ENCODE measurements at regions of chr6 and their contacts with region 1.

Region 1: GRCh38 chr6:70520575-70520974 is 46.2 kb upstream of the SDHAF4 start:
- DNase-seq: peak in 5 of 35 experiments; percentile 2 to 50 (median 5)
- ATAC-seq: no peak
- H3K4me3 ChIP-seq: no peak overlapping the region
- H3K4me3 Mint-ChIP-seq: no peak overlapping the region
- H3K27ac ChIP-seq: no peak overlapping the region
- H3K27ac Mint-ChIP-seq: no peak overlapping the region
- H3K4me1 ChIP-seq: peaks cover 0 to 4% of the 10 kb centered on the region in 2 experiments
- H3K4me1 Mint-ChIP-seq: peaks cover 7 to 16% (median 7%) of the 10 kb centered on the region in 3 donors
- H3K27me3 ChIP-seq: no peaks in the 10 kb centered on the region
- H3K27me3 Mint-ChIP-seq: no peaks in the 10 kb centered on the region

Region 2: DNA sequence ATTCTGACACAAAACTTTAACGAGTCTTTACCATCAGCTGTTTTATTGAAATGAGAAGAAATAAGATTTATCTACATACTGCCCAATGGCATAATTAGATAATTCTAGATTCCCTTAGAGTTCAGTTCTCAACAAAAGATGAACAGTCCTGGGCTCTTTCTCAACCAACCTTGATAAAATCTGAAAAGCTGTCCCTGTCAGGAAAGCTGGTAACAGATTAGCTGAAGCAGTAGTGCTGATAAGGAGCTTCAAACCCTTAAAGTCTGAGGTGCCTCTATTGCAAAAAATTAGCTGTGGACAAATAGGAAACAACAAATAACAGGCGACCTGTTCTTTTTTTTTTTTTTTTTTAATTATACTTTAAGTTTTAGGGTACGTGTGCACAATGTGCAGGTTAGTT is 143.2 kb before region 1 on chr6:
- CTCF ChIA-PET with region 1: no interaction called
- POLR2A ChIA-PET with region 1: no interaction called
- DNase-seq: no peak
- ATAC-seq: no peak
- H3K4me3 ChIP-seq: no peak overlapping the region
- H3K4me3 Mint-ChIP-seq: no peak overlapping the region
- H3K27ac ChIP-seq: no peak overlapping the region
- H3K27ac Mint-ChIP-seq: no peak overlapping the region
- H3K4me1 ChIP-seq: no peaks in the 10 kb centered on the region
- H3K4me1 Mint-ChIP-seq: no peaks in the 10 kb centered on the region
- H3K27me3 ChIP-seq: no peaks in the 10 kb centered on the region
- H3K27me3 Mint-ChIP-seq: peaks cover 14 to 20% of the 10 kb centered on the region in 2 donors

Region 3: DNA sequence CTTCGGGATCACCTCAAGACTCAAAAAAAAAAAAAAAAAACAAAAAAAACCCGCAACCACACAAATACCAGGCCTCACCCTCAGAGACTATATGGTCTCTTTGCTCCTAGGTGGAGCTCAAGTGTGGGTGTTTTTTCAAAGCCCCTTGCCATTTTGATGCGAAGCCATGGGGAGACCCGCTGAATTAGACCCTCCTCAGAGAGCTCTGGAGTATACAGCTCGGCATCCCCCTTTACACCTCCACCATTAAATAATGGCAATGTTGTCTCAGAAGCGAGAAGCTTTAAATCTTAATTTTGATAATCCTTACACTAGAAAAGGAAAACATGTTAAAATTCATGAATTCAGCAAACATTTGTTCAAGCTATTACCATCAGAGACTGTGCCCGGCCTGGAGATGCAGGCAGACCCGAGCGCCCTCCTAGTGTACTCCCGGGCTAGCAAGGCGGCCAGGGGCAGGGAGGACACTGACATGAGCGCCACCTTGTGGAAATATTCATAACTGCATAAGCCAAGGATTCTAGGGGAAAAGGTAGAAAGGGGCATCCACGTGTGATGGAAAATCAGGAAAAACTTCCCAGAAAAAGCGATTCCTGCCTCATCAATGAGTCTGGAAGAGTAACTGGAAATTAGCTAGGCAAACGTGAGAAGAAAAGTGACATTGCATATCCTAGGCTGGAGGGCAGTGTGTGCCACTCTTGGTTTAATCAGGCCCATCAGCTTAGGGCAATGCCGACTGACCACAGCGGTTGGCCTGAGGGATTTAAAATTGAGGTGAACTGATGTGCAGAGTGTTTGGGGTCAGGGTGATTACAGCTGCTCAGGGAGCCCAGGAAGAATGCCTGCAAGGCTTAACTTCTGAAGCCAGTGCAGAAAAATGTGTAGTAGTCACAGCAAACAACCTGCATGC is 363.8 kb after region 1 on chr6:
- CTCF ChIA-PET with region 1: interaction called, 3 to 15 read pairs
- POLR2A ChIA-PET with region 1: no interaction called
- DNase-seq: peak in 33 of 35 experiments; percentile 10 to 73 (median 36)
- ATAC-seq: peak; percentile 71 to 76 (median 74)
- H3K4me3 ChIP-seq: no peak overlapping the region
- H3K4me3 Mint-ChIP-seq: no peak overlapping the region
- H3K27ac ChIP-seq: no peak overlapping the region
- H3K27ac Mint-ChIP-seq: no peak overlapping the region
- H3K4me1 ChIP-seq: peaks cover 0 to 2% of the 10 kb centered on the region in 2 experiments
- H3K4me1 Mint-ChIP-seq: no peaks in the 10 kb centered on the region
- H3K27me3 ChIP-seq: peaks cover 0 to 15% of the 10 kb centered on the region in 2 experiments
- H3K27me3 Mint-ChIP-seq: peaks cover 22 to 28% of the 10 kb centered on the region in 2 donors

Region 4: GRCh38 chr6:70955441-70956190 is 435.0 kb after region 1 on chr6:
- CTCF ChIA-PET with region 1: interaction called in 1 of 2 experiments, 12 read pairs
- POLR2A ChIA-PET with region 1: no interaction called
- DNase-seq: peak; percentile 58 to 88 (median 78)
- ATAC-seq: peak; percentile 89 to 96 (median 93)
- H3K4me3 ChIP-seq: peak overlapping the region; percentile 47 to 75
- H3K4me3 Mint-ChIP-seq: peak overlapping the region; percentile 73 to 82 (median 74)
- H3K27ac ChIP-seq: no peak overlapping the region
- H3K27ac Mint-ChIP-seq: no peak overlapping the region
- H3K4me1 ChIP-seq: peaks cover 2 to 24% of the 10 kb centered on the region in 2 experiments
- H3K4me1 Mint-ChIP-seq: peaks cover 5 to 26% (median 19%) of the 10 kb centered on the region in 3 donors
- H3K27me3 ChIP-seq: peaks cover 24 to 34% of the 10 kb centered on the region in 2 experiments
- H3K27me3 Mint-ChIP-seq: peaks cover 50 to 58% of the 10 kb centered on the region in 2 donors